MCF 10A (cell line): ENCODE measurements at regions of chr2 and their contacts with region 1.

Region 1: DNA sequence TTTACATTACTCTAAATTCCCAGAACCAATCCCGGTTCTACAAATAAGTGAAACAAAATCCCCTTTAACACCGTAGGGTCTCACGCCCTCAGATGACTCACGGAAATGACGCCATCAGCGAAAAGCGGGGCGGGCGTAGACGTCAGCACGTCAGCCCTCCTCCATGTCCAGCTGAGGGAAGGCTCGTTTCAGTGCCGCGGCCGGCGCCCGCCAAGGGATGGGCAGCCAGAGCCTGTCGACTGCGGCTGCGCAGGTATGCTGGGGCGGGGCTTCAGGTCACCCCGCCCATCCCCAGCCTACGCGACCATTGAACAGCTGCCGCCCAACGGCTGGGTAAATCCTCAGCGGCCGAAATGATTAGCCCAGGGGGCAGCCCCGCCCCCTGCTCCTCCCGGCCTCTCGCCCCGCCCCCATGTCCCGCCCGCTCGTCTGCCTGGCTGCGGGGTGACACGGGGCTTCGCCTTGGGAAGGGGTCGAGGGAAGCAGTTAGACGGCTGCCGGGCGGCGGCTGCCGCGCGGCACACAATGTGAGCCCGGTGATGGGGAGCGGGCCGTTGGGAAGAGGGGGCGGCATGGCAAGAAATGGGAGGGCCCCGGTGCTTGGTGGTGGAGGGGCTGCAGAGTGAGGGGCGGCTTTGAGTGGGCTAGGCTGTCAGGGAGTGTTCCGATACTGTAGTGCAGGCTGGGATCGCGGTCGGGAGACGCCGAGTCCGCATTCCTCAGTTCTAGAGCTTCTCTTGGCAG is at the start of gene NBEAL1:
- DNase-seq: peak; percentile 97
- H3K4me3 Mint-ChIP-seq: peak within 1 kb of the TSS; percentile 98
- H3K27ac Mint-ChIP-seq: peak within 1 kb of the TSS; percentile 99
- H3K4me1 Mint-ChIP-seq: peaks cover 30% of the 10 kb centered on the region
- H3K27me3 Mint-ChIP-seq: no peaks in the 10 kb centered on the region
- CTCF ChIP-seq: no peak
- total RNA-seq, gene NBEAL1: 18.8 and 20.4 TPM in 2 replicates

Region 2: DNA sequence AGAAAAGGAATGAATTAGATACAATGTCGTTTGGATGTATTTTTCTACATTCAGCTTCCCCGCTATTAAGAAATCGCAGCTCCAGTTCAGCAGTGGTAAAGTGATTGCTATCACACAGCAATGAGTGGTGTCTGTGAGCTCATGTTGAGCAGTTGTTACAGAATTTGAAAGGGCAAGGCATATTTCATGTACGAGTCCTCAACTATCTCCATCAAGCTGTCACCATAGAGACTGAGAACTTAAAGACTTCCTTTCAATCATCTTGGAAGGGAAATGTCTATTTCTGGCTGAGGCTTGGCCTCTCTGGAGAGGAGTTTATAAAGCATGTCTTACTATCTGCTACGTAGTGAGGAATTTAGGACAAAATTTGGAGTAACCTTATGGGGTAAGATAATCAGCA is 404.2 kb before region 1 on chr2:
- CTCF ChIA-PET with region 1: no interaction called
- POLR2A ChIA-PET with region 1: no interaction called
- intact Hi-C with region 1: no loop called
- DNase-seq: no peak
- H3K4me3 Mint-ChIP-seq: no peak overlapping the region
- H3K27ac Mint-ChIP-seq: no peak overlapping the region
- H3K4me1 Mint-ChIP-seq: peaks cover 10% of the 10 kb centered on the region
- H3K27me3 Mint-ChIP-seq: no peaks in the 10 kb centered on the region
- CTCF ChIP-seq: no peak

Region 3: DNA sequence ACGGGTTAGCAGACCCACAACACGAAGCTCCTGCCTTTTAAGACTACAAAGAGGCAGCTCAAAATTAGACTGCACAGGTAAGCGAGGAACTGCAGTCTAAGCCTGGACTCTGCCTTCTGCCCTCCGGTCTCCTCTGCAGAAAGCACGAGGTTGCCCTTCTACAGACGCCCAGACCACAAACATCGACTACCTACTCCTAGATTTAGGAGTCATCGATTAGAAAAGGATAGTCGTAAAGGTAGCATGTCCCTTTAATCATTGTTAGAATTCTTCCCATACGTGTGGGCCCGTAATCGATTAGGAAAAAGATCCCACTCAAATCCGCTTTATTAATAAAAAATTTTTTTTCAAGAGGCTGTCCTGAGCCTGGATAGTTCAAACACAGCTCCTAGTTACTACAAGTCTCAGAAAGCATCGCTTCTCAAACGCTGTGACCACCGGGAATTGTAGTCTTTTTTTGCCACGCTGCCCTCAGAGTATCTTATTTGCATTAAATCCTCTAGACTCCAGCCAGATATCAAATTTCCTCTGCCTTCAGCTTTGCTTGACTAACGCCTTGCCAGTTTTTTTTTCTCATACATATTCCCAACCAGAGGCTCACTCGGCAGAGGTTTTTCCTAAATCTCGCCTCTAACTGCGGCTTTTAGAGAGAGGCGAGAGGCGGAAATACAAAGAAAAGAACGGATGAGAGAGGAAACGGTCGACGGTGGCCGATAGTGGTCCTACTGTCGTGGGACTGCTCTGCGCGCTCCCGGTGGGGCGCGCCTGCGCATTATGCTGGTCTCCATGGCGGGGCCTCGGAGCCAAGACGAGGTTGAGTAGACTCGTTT is 102.9 kb before region 1 on chr2 and contains the starts of genes CARF and WDR12:
- CTCF ChIA-PET with region 1: interaction called, 3 read pairs
- POLR2A ChIA-PET with region 1: interaction called, 41 read pairs
- intact Hi-C with region 1: loop called (anchors 2 kb)
- DNase-seq: peak; percentile 95
- H3K4me3 Mint-ChIP-seq: peak within 1 kb of the TSS; percentile 96
- H3K27ac Mint-ChIP-seq: peak within 1 kb of the TSS; percentile 87
- H3K4me1 Mint-ChIP-seq: peaks cover 18% of the 10 kb centered on the region
- H3K27me3 Mint-ChIP-seq: no peaks in the 10 kb centered on the region
- CTCF ChIP-seq: no peak
- total RNA-seq, gene CARF: 6.8 and 8.2 TPM in 2 replicates
- total RNA-seq, gene WDR12: 141 and 146 TPM in 2 replicates

Region 4: DNA sequence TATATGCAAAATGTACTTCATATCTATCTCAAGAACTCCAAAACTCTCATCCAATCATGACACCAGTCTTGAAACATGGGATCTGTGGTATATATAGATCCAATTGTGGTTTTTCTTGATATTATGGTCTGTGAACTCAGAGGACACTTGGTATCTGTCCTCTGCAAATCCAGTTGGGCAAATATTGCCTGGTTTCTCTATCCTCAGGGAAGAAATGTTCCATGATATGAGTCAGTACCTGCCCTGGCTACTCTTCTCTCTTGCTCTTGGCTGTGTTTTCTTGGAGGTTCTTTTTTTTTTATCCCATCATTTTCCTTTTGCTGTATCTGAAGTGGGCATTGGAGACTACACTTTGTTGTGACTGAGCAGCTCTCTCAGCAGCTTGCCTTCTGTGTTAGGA is 11.0 kb after region 1 on chr2:
- CTCF ChIA-PET with region 1: interaction called, 6 read pairs
- POLR2A ChIA-PET with region 1: interaction called, 11 read pairs
- intact Hi-C with region 1: no loop called
- DNase-seq: no peak
- H3K4me3 Mint-ChIP-seq: no peak overlapping the region
- H3K27ac Mint-ChIP-seq: no peak overlapping the region
- H3K4me1 Mint-ChIP-seq: peaks cover 10% of the 10 kb centered on the region
- H3K27me3 Mint-ChIP-seq: no peaks in the 10 kb centered on the region
- CTCF ChIP-seq: no peak